K562 (cell line): ENCODE measurements at regions of chr17 and their contacts with region 1.

Region 1: GRCh38 chr17:9968902-9969617 is 64.0 kb upstream of the RCVRN start:
- DNase-seq: no peak
- ATAC-seq: no peak
- H3K4me3 ChIP-seq: no peak overlapping the region
- H3K27ac ChIP-seq: no peak overlapping the region
- H3K4me1 ChIP-seq: no peaks in the 10 kb centered on the region
- H3K27me3 ChIP-seq: peaks cover 0 to 8% of the 10 kb centered on the region in 2 experiments; a peak in 1 of 5 replicates
- CTCF ChIP-seq: no peak
- EP300 ChIP-seq: no peak
- POLR2A ChIP-seq: no peak
- RAD21 ChIP-seq: no peak

Region 2: GRCh38 chr17:10226930-10227685 is 258.0 kb after region 1 on chr17:
- CTCF ChIA-PET with region 1: no interaction called
- POLR2A ChIA-PET with region 1: no interaction called
- in situ Hi-C with region 1: no loop called
- intact Hi-C with region 1: loop called (anchors 5 kb)
- DNase-seq: peak; percentile 34 to 76 (median 65)
- ATAC-seq: peak; percentile 84
- H3K4me3 ChIP-seq: no peak overlapping the region
- H3K27ac ChIP-seq: no peak overlapping the region
- H3K4me1 ChIP-seq: no peaks in the 10 kb centered on the region
- H3K27me3 ChIP-seq: no peaks in the 10 kb centered on the region
- CTCF ChIP-seq: peak; percentile 56 to 66 (median 57)
- EP300 ChIP-seq: no peak
- POLR2A ChIP-seq: no peak
- RAD21 ChIP-seq: peak in 1 of 2 experiments; percentile 46; a peak in 2 of 4 replicates